AG04449 (cell line): ENCODE measurements at regions of chr2 and their contacts with region 1.

Region 1: GRCh38 chr2:162301151-162301804 is 17.2 kb downstream of the IFIH1 start:
- DNase-seq: peak; percentile 14
- H3K4me3 ChIP-seq: no peak overlapping the region
- CTCF ChIP-seq: peak; percentile 70

Region 2: DNA sequence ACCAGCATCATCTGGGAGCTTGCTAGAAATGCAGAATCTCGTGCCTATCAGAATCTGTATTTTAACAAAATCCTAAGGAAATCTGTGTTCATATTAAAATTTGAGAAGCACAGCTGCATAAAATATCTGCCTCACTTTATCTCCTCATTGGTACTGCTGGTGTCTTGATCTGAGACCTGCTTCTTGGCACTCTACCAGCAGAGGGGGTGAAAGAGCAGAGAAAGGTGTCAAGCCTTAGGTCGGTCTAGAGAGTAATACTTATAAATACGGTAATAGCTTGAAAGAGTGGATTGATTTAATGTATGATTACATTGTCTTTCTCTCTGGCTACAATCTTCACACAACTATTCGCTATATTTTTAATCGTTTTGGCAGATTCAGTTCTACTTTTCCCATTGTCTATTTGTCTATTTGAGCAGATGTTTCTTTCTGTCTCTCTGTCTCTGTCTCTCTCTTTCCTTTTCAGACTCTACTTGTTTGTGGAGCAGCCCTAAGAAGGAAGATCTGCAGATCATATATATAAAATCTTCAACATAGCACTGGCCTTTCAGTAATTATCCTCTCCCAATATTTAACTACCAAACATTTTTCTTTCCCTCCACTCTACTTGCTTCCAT is 147.6 kb before region 1 on chr2:
- CTCF ChIA-PET with region 1: interaction called, 254 read pairs
- POLR2A ChIA-PET with region 1: no interaction called
- DNase-seq: no peak
- H3K4me3 ChIP-seq: no peak overlapping the region
- CTCF ChIP-seq: peak; percentile 70

Region 3: GRCh38 chr2:162174746-162175145 is 126.5 kb before region 1 on chr2:
- CTCF ChIA-PET with region 1: interaction called, 161 read pairs
- POLR2A ChIA-PET with region 1: no interaction called
- DNase-seq: no peak
- H3K4me3 ChIP-seq: no peak overlapping the region
- CTCF ChIP-seq: no peak

Region 4: GRCh38 chr2:162226836-162227235 is 74.4 kb before region 1 on chr2:
- CTCF ChIA-PET with region 1: interaction called, 656 read pairs
- POLR2A ChIA-PET with region 1: no interaction called
- DNase-seq: no peak
- H3K4me3 ChIP-seq: no peak overlapping the region
- CTCF ChIP-seq: no peak

Region 5: DNA sequence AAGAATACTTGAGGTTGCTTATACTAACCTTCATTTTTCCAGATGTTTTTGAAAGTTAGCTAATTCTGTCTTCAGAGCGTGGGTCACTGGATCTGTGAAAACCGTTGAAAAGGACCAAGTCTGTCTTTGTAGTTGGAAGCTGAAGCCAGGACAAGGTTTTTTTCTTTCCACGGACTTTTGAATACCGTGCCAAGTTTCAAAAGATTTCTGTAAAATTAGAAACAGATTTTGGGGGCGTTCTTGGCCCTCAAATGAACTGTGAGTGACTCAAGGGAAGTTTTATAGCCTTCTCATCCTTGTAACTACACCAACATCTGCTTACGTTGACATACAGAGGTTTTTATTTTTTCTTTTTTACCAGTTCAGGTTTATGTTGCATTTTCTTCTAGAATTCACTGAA is 58.0 kb before region 1 on chr2 and contains the start of gene FAP:
- CTCF ChIA-PET with region 1: interaction called, 67 read pairs
- POLR2A ChIA-PET with region 1: interaction called, 3 read pairs
- DNase-seq: peak; percentile 87
- H3K4me3 ChIP-seq: peak within 1 kb of the TSS; percentile 64
- CTCF ChIP-seq: no peak

Region 6: DNA sequence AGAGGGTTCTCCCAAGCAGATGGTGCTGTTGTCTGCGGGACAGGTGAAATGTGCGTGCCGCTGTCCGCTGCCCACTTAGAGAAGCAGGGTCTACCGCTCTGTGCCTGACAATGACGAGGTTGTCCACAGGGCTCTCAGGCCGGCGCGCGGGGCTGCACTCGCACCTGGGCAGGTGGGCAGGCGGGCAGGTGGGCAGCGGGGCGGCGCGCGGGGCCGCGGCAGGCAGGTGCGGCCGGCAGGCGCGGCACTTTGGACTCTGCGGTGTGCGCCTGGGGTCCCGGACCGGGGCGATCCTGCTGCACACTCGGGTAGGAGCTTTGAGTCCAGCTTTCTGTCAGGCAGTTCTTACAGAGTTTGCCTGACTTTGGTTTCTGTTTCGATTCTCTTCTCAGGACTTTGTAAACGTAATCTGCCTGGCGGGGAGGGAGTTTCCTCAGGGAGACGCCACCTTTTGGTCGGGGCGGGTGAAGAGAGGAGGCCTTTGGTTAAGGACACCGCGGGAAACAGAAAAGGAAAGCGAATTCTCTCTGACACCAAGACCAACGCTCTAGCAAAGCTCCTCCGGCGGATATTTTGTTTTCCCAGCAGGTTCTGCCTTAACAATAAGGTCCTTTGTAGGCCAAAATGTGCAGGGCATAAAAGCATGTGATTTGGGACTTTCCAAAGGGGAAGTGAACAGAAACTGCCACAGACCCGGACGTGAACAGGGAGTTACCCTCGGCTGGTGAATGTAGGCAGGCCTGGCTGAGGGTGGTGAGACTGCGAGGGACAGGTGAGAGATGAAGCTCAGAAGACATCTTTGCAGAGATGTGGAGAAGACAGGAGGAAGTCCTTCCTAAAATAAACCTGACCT is 17.3 kb after region 1 on chr2 and contains the start of gene IFIH1:
- CTCF ChIA-PET with region 1: interaction called, 29 read pairs
- POLR2A ChIA-PET with region 1: no interaction called
- DNase-seq: peak; percentile 34
- H3K4me3 ChIP-seq: peak within 1 kb of the TSS; percentile 70
- CTCF ChIP-seq: peak; percentile 58